ENCODE measurements at regions of chr5 and their contacts with region 1.

Region 1: GRCh38 chr5:97142521-97143254 is at the start of gene LIX1:
- DNase-seq: peak; percentile 34
- H3K4me3 ChIP-seq: no peak within 1 kb of the TSS
- H3K27ac ChIP-seq: no peak within 1 kb of the TSS
- H3K4me1 ChIP-seq: no peaks in the 10 kb centered on the region
- H3K27me3 ChIP-seq: no peaks in the 10 kb centered on the region
- CTCF ChIP-seq: peak; percentile 50
- total RNA-seq, gene LIX1: 0.61 TPM in 1 of 2 donors, not detected in the other

Region 2: DNA sequence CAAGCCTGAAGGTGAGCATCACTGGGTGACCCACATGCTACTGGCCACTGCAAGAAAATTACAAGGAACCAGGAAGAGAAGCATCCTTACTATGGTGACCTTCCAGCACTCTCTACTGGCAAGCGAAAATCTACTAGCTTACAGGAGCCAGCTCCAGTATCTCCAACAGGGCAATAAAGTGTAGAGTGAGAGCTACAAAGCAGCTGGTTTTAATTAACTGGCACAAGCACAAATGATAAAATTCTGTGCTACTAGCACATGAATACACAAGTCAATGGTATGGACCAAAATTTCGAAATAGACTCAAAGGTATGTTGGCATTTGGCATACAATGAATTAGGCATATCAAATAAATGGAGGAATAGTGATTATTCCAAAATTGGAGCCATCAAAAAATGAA is 593.7 kb before region 1 on chr5:
- intact Hi-C with region 1: no loop called
- DNase-seq: no peak
- H3K4me3 ChIP-seq: no peak overlapping the region
- H3K27ac ChIP-seq: no peak overlapping the region
- H3K4me1 ChIP-seq: no peaks in the 10 kb centered on the region
- H3K27me3 ChIP-seq: no peaks in the 10 kb centered on the region
- CTCF ChIP-seq: no peak

Region 3: DNA sequence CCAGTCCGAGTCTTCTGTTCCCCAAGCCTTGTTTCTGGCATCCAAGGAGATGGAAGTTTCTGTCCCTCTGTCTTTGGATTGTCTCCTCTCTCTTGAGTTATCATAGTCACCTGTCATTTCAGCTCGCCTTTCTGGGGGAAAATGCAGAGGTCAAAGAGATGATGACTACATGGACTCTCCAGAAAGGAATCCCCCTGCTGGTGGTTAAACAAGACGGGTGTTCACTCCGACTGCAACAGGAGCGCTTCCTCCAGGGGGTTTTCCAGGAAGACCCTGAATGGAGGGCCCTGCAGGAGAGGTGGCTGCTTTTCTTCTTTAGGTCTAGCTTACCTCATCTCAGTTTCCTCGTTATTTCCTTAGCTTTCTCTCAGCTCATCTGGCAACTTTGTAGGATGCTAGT is 241.3 kb before region 1 on chr5:
- intact Hi-C with region 1: no loop called
- DNase-seq: no peak
- H3K4me3 ChIP-seq: no peak overlapping the region
- H3K27ac ChIP-seq: no peak overlapping the region
- H3K4me1 ChIP-seq: no peaks in the 10 kb centered on the region
- H3K27me3 ChIP-seq: no peaks in the 10 kb centered on the region
- CTCF ChIP-seq: no peak

Region 4: DNA sequence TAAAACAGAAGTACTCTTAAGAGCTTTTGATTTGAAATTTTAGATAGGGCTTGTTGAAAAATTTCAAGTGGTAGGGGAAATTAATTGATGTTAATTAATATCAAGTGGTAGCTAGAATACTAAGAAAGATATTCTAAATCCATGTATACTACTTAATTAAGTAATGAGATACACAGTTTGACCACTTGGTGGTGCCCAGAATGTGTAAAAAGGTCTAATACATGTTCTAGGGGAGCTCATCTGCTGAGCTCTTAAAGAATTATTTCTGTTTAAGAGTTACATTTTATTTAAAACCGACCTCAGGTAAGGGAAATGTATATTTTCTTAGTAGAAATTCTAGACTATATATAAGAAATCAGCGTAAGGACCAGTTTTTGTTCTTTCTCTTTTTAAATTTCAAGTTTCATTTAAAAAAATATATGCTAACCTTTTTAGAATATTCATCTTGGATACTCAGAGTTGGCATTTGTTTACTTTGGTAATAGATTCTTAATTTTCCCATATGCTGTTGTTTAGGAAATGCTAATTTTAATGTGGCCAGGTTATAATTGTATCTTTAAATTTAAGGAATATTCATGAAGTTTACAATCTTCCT is 145.3 kb before region 1 on chr5:
- intact Hi-C with region 1: loop called (anchors 10 kb)
- DNase-seq: no peak
- H3K4me3 ChIP-seq: no peak overlapping the region
- H3K27ac ChIP-seq: no peak overlapping the region
- H3K4me1 ChIP-seq: no peaks in the 10 kb centered on the region
- H3K27me3 ChIP-seq: no peaks in the 10 kb centered on the region
- CTCF ChIP-seq: peak; percentile 22

Region 5: DNA sequence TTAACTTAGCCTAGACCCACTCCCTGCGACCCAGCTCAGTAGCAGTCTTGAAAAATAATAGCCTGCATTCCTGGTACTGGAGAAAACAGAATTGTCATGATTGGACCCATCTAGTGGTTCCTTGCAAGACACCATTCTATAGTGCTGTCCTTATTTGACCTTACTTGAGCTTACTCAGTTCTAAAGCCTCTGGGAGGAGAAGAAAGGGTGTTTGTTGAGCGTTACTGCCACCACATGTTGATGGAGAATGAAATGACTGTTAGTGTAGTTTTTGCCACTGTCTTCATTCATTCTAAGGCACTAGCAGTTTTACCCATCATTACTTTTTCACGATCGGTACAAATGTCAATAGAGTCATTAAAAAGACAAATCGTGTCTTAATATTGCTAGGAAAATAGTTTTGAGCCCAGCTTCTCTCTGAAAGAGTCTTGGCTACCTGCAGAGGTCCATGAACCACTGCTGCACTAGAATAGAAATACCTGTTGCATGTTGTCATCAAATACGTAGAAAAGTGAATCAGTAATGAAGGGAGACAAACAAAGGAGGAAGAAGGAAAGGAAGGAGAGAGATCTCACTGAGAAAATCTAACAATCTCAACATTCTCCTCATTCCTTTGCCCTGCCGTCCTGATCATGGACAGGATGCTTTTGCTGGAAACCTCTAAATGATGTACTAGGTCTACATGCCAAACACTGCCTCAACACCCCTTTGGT is 96.3 kb before region 1 on chr5:
- intact Hi-C with region 1: loop called (anchors 5 kb)
- DNase-seq: no peak
- H3K4me3 ChIP-seq: no peak overlapping the region
- H3K27ac ChIP-seq: no peak overlapping the region
- H3K4me1 ChIP-seq: no peaks in the 10 kb centered on the region
- H3K27me3 ChIP-seq: no peaks in the 10 kb centered on the region
- CTCF ChIP-seq: no peak

Region 6: GRCh38 chr5:97425511-97425910 is 282.8 kb after region 1 on chr5:
- intact Hi-C with region 1: no loop called
- DNase-seq: no peak
- H3K4me3 ChIP-seq: no peak overlapping the region
- H3K27ac ChIP-seq: no peak overlapping the region
- H3K4me1 ChIP-seq: no peaks in the 10 kb centered on the region
- H3K27me3 ChIP-seq: no peaks in the 10 kb centered on the region
- CTCF ChIP-seq: no peak